GM18951 (cell line): ENCODE measurements at regions of chr9 and their contacts with region 1.

Region 1: GRCh38 chr9:1726993-1727759 is 288.0 kb upstream of the SMARCA2 start:
- POLR2A ChIP-seq: no peak

Region 2: GRCh38 chr9:935344-935965 is 791.7 kb before region 1 on chr9:
- in situ Hi-C with region 1: no loop called
- POLR2A ChIP-seq: no peak

Region 3: DNA sequence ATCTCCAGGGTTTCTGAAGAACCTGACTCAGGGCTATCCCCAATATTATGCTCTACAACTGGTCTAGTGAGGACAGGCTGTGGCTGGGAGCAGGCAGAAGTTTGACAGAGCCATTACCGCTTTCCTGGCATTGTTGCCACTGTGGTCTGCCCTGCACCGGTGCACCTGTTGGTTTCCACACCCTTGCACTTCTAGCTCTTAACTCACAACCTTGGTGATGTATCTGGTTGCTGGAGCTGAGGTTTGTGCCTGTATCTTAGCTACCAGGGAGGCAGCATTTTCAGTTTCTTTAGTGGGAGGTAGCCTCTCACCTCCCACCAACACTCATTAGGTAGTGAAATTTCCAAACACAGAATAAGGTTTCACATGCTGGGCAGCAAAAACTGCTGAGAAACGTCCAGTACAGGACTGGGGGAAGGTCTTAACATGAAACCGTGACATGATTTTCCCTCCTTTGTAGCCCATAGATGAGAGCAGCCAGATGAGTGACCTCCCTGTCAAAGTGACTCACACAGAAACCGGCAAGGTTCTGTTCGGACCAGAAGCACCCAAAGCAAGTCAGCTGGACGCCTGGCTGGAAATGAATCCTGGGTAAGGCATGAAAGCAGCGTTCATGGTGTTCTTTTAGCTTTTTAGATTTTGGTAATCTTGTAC is 345.7 kb after region 1 on chr9:
- in situ Hi-C with region 1: loop called (anchors 10 kb)
- POLR2A ChIP-seq: no peak